Dendritic cell treated with granulocyte-macrophage colony-stimulating factor and Interleukin-4, amounts not matched to agents 40 ng/mL and 50 ng/mL, for 4 days (primary cell): ENCODE measurements at regions of chr5 and their contacts with region 1.

Region 1: GRCh38 chr5:178279725-178280438 is 47.3 kb upstream of the PHYKPL start:
- H3K4me3 Mint-ChIP-seq: no peak overlapping the region
- H3K27ac Mint-ChIP-seq: no peak overlapping the region
- H3K4me1 Mint-ChIP-seq: peaks cover 11% of the 10 kb centered on the region
- H3K27me3 Mint-ChIP-seq: peaks cover 19% of the 10 kb centered on the region

Region 2: DNA sequence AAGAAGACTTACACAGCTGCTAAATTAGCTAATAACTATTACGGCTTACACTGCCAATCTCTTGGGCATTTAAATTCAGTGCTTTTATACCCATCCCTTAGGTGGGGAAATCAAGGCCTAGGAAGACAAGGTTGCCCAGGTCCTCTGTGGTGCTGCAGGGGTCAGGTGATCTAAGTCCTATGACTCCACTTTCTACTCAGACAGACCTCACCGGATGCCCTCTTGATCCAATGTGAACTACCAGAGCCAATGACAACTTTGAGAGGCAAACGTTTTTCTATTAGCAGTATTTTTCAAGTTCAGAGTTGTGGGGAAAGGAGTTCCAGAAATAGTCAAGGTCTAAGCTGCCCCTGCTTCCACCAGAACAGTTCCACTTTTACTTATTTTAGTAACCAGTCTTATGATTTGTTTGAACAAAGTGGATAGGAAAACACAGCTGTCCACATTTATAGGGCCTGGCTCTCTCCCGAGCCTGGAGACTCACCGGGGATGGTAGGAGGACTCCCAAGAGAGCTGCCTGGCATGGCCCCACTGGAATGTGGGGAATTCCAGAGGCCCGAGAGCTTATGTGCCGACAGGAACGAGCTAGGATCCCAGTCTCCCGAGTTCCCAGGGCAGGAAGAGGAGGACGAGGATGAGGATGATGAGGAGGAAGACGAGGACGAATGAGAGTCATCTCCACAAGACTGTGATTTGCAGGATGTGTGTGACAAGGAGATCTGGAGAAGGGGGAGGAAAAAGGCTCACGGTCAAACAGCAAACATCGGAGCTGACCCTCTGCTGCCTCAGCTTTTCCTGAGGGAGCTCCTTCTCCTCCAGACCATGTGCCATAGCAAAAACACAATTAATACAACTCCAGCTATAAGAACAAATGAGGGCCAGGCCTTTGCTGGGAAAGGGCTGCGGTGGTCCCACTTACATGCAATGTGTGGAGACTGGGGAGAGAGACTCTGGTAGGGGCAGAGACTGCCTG is 742.2 kb before region 1 on chr5:
- intact Hi-C with region 1: no loop called
- H3K4me3 Mint-ChIP-seq: no peak overlapping the region
- H3K27ac Mint-ChIP-seq: no peak overlapping the region
- H3K4me1 Mint-ChIP-seq: no peaks in the 10 kb centered on the region
- H3K27me3 Mint-ChIP-seq: no peaks in the 10 kb centered on the region

Region 3: GRCh38 chr5:178232124-178232919 is 47.6 kb before region 1 on chr5 and contains the start of gene PHYKPL:
- intact Hi-C with region 1: loop called (anchors 1 kb)
- H3K4me3 Mint-ChIP-seq: peak within 1 kb of the TSS; percentile 84
- H3K27ac Mint-ChIP-seq: peak within 1 kb of the TSS; percentile 94
- H3K4me1 Mint-ChIP-seq: peaks cover 89% of the 10 kb centered on the region
- H3K27me3 Mint-ChIP-seq: no peaks in the 10 kb centered on the region

Region 4: GRCh38 chr5:178461004-178461730 is 181.3 kb after region 1 on chr5:
- intact Hi-C with region 1: loop called (anchors 10 kb)
- H3K4me3 Mint-ChIP-seq: peak overlapping the region; percentile 25
- H3K27ac Mint-ChIP-seq: peak overlapping the region; percentile 79
- H3K4me1 Mint-ChIP-seq: peaks cover 62% of the 10 kb centered on the region
- H3K27me3 Mint-ChIP-seq: peaks cover 3% of the 10 kb centered on the region

Region 5: GRCh38 chr5:178551059-178551458 is 271.2 kb after region 1 on chr5:
- intact Hi-C with region 1: loop called (anchors 1 kb)
- H3K4me3 Mint-ChIP-seq: no peak overlapping the region
- H3K27ac Mint-ChIP-seq: no peak overlapping the region
- H3K4me1 Mint-ChIP-seq: peaks cover 18% of the 10 kb centered on the region
- H3K27me3 Mint-ChIP-seq: no peaks in the 10 kb centered on the region

Region 6: GRCh38 chr5:178590141-178590923 is 310.4 kb after region 1 on chr5 and contains the start of gene COL23A1:
- intact Hi-C with region 1: loop called (anchors 1 kb)
- H3K4me3 Mint-ChIP-seq: peak within 1 kb of the TSS; percentile 76
- H3K27ac Mint-ChIP-seq: peak within 1 kb of the TSS; percentile 54
- H3K4me1 Mint-ChIP-seq: peaks cover 29% of the 10 kb centered on the region
- H3K27me3 Mint-ChIP-seq: peaks cover 44% of the 10 kb centered on the region